Activated naive CD4-positive, alpha-beta T cell treated with anti-CD3 and anti-CD28 coated beads, Interleukin-2, amount 10 ng/mL, durations not matched to agents 7 days and 5 days (primary cell): ENCODE measurements at regions of chr16 and their contacts with region 1.

Region 1: GRCh38 chr16:361872-362701 is 8.3 kb downstream of the MRPL28 start:
- DNase-seq: peak; percentile 87
- H3K4me3 Mint-ChIP-seq: peak overlapping the region; percentile 26
- H3K27ac Mint-ChIP-seq: no peak overlapping the region
- H3K4me1 Mint-ChIP-seq: peaks cover 6% of the 10 kb centered on the region
- H3K27me3 Mint-ChIP-seq: peaks cover 18% of the 10 kb centered on the region

Region 2: GRCh38 chr16:106623-107324 is 255.3 kb before region 1 on chr16:
- CTCF ChIA-PET with region 1: interaction called, 52 read pairs
- DNase-seq: peak; percentile 68
- H3K4me3 Mint-ChIP-seq: no peak overlapping the region
- H3K27ac Mint-ChIP-seq: no peak overlapping the region
- H3K4me1 Mint-ChIP-seq: no peaks in the 10 kb centered on the region
- H3K27me3 Mint-ChIP-seq: no peaks in the 10 kb centered on the region

Region 3: DNA sequence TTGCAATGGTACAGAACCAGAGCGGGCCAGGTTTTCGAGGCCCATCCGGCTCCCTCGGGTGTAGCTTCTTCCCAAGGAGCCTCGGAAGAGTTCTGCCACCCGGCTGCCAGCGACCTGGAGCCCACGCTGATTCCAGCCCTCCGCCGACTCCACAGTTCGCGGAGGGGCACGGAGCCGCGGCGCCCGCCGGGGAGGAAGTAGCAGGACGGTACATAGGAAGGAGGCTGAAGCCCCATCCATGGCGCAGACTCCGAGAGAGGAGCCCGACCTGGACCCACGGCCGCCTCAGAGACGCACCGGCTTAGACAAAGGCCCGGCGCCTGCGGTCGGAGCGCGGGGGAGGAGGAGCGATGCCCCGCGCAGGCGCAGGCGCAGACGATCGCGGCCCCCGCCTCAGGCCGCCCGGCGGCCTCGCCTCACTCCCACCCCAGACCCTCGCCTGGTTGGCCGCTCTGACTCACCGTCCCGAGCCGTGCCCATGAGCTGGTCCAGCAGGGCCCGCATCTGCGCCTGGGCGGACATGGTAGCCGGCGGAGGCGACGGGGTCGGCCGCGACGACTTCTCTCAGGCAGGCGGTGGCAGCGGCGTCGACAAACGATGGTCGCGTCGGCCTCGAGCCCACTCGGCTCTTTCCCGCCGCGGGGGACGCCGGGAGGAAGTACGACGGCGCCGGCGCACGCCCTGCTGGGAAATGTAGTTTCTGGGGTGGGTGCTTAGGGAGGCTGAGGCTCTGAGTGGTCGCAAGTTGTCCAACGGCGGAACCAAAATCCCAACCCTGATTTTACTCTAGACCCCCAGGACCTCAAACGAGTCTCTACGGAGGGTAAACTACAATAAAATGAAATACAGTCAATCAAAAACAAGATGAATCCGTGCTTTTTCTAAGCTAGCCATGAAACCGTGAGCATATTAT is 133.0 kb before region 1 on chr16 and contains the start of gene LUC7L:
- CTCF ChIA-PET with region 1: interaction called, 12 read pairs
- DNase-seq: peak; percentile 90
- H3K4me3 Mint-ChIP-seq: peak within 1 kb of the TSS; percentile 94
- H3K27ac Mint-ChIP-seq: peak within 1 kb of the TSS; percentile 94
- H3K4me1 Mint-ChIP-seq: peaks cover 36% of the 10 kb centered on the region
- H3K27me3 Mint-ChIP-seq: peaks cover 5% of the 10 kb centered on the region